Caco-2 (cell line): ENCODE measurements at regions of chrX and their contacts with region 1.

Region 1: DNA sequence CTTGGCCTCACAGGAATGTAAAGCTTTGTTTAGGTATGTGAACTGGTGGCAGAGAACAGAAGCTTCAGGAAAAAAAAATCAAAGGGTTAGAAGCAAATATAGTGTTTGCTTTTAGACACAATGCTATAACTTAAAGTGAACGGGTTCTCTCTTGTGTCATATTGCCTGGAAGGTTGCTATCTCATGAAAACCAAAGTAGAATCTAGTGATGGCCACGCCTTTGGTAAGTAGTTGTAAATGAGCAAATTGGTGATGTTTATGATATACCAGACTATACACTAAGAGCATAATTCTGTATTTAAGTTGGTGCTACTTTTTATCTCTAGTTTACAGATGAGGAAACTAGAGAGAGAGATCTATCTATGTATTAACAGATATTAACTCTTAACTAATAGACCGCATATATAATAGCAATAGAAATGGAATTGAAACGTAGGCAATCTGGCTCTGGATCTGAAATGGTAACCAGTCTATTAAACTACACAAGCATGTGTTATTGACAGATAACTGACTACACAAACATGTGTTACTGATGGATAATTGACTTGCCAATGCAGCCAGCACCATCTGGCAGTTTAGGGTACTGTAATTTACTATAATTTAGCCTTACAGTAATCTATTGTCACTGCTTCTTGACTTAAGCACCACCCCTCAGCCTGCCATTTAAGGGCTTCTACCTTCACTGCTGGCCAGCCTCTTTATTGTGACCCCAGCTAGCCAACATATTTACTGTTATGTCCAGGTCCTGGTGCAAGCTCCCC is 40.8 kb downstream of the HCCS start:
- DNase-seq: peak in 1 of 2 experiments; percentile 9
- H3K4me3 ChIP-seq: no peak overlapping the region
- H3K4me3 Mint-ChIP-seq: peak overlapping the region; percentile 37
- H3K27ac Mint-ChIP-seq: peak overlapping the region; percentile 71
- H3K4me1 ChIP-seq: peaks cover 4% of the 10 kb centered on the region
- H3K4me1 Mint-ChIP-seq: peaks cover 7% of the 10 kb centered on the region
- H3K27me3 ChIP-seq: no peaks in the 10 kb centered on the region
- H3K27me3 Mint-ChIP-seq: no peaks in the 10 kb centered on the region
- CTCF ChIP-seq: no peak

Region 2: DNA sequence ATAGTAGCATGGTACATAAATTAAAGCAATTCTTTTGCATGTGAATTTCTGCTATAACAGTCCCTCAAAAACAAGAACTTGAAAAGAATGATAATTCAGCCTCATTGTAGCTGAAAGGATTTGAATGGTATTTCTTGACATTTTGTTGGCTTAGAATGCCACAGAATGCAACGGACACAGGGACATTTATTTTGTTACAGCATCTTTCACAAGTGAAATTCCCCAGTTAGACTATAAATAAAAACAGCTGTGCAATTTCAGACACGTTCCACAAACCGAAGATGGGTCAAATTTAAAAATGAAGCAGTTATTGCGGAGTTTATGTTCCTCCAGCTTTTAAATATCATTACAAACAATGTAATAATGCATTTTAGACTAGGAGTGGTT is 58.4 kb after region 1 on chrX:
- CTCF ChIA-PET with region 1: no interaction called
- POLR2A ChIA-PET with region 1: no interaction called
- intact Hi-C with region 1: loop called (anchors 1 kb)
- DNase-seq: no peak
- H3K4me3 ChIP-seq: no peak overlapping the region
- H3K4me3 Mint-ChIP-seq: no peak overlapping the region
- H3K27ac Mint-ChIP-seq: no peak overlapping the region
- H3K4me1 ChIP-seq: peaks cover 12% of the 10 kb centered on the region
- H3K4me1 Mint-ChIP-seq: peaks cover 11% of the 10 kb centered on the region
- H3K27me3 ChIP-seq: no peaks in the 10 kb centered on the region
- H3K27me3 Mint-ChIP-seq: no peaks in the 10 kb centered on the region
- CTCF ChIP-seq: no peak